ENCODE measurements at regions of chr15 and their contacts with region 1.

Region 1: DNA sequence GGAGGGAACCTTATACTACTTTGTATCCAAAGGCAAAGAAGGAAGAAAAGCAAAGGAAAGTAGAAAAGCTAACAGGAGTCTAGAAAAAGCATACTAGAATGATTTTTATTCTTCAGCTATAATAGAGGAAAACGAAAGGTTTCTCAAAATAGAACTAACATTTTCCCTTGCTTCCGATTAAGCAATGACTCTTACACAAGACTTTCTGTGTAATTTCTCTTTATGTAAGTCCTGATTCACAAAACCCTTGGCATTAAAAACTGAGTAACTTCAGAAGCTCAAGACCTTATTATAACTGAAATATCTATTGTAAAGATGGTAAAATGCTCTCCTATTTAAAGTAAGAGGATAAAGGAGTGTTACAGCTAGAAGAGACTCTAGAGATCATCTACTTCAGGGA is 97.4 kb downstream of the DTWD1 start:
- DNase-seq: peak; percentile 63 to 83 (median 75)
- H3K4me3 ChIP-seq: peak overlapping the region; percentile 12 to 68 (median 47)
- H3K4me3 Mint-ChIP-seq: peak overlapping the region; percentile 48 to 79
- H3K27ac ChIP-seq: peak overlapping the region; percentile 63 to 75
- H3K27ac Mint-ChIP-seq: peak overlapping the region; percentile 82 to 96 (median 91)
- H3K4me1 ChIP-seq: peaks cover 78 to 82% of the 10 kb centered on the region in 2 donors
- H3K4me1 Mint-ChIP-seq: peaks cover 79% of the 10 kb centered on the region
- H3K27me3 ChIP-seq: no peaks in the 10 kb centered on the region
- H3K27me3 Mint-ChIP-seq: no peaks in the 10 kb centered on the region
- CTCF ChIP-seq: no peak

Region 2: GRCh38 chr15:49620658-49621368 is 97.4 kb before region 1 on chr15 and contains the starts of genes DTWD1 and FAM227B:
- intact Hi-C with region 1: loop called in 1 of 2 experiments (anchors 10 kb)
- DNase-seq: peak; percentile 96 to 98 (median 97)
- H3K4me3 ChIP-seq: peak within 1 kb of the TSS; percentile 80 to 93 (median 91)
- H3K4me3 Mint-ChIP-seq: peak within 1 kb of the TSS; percentile 92 to 95
- H3K27ac ChIP-seq: peak within 1 kb of the TSS; percentile 90 to 93
- H3K27ac Mint-ChIP-seq: peak within 1 kb of the TSS; percentile 93 to 99 (median 97)
- H3K4me1 ChIP-seq: peaks cover 17 to 31% of the 10 kb centered on the region in 2 donors
- H3K4me1 Mint-ChIP-seq: peaks cover 31% of the 10 kb centered on the region
- H3K27me3 ChIP-seq: no peaks in the 10 kb centered on the region
- H3K27me3 Mint-ChIP-seq: no peaks in the 10 kb centered on the region
- CTCF ChIP-seq: no peak
- polyA plus RNA-seq, gene DTWD1: 8.3 to 11.8 (median 10.2) TPM
- polyA plus RNA-seq, gene FAM227B: 0.28 to 0.72 (median 0.49) TPM

Region 3: GRCh38 chr15:49789436-49789835 is 71.2 kb after region 1 on chr15:
- intact Hi-C with region 1: no loop called
- DNase-seq: no peak
- H3K4me3 ChIP-seq: no peak overlapping the region
- H3K4me3 Mint-ChIP-seq: no peak overlapping the region
- H3K27ac ChIP-seq: no peak overlapping the region
- H3K27ac Mint-ChIP-seq: no peak overlapping the region
- H3K4me1 ChIP-seq: no peaks in the 10 kb centered on the region
- H3K4me1 Mint-ChIP-seq: no peaks in the 10 kb centered on the region
- H3K27me3 ChIP-seq: no peaks in the 10 kb centered on the region
- H3K27me3 Mint-ChIP-seq: no peaks in the 10 kb centered on the region
- CTCF ChIP-seq: no peak

Region 4: GRCh38 chr15:49962044-49962602 is 243.9 kb after region 1 on chr15:
- intact Hi-C with region 1: no loop called
- DNase-seq: no peak
- H3K4me3 ChIP-seq: no peak overlapping the region
- H3K4me3 Mint-ChIP-seq: no peak overlapping the region
- H3K27ac ChIP-seq: no peak overlapping the region
- H3K27ac Mint-ChIP-seq: no peak overlapping the region
- H3K4me1 ChIP-seq: no peaks in the 10 kb centered on the region
- H3K4me1 Mint-ChIP-seq: no peaks in the 10 kb centered on the region
- H3K27me3 ChIP-seq: no peaks in the 10 kb centered on the region
- H3K27me3 Mint-ChIP-seq: peaks cover 0 to 2% (median 0%) of the 10 kb centered on the region in 3 donors
- CTCF ChIP-seq: no peak

Measured in CD14-positive monocyte (primary cell).